Thyroid gland (tissue), 4 donors: ENCODE measurements at regions of chr21 and their contacts with region 1.

Region 1: GRCh38 chr21:44817506-44817880 is 369 bp downstream of the SUMO3 start:
- DNase-seq: peak; percentile 84 to 86
- H3K4me3 ChIP-seq: peak overlapping the region; percentile 35 to 87 (median 39)
- H3K27ac ChIP-seq: peak overlapping the region in 2 of 3 donors; percentile 61 to 71
- H3K4me1 ChIP-seq: peaks cover 19 to 46% of the 10 kb centered on the region in 2 donors
- H3K27me3 ChIP-seq: no peaks in the 10 kb centered on the region
- CTCF ChIP-seq: no peak
- POLR2A ChIP-seq: no peak

Region 2: DNA sequence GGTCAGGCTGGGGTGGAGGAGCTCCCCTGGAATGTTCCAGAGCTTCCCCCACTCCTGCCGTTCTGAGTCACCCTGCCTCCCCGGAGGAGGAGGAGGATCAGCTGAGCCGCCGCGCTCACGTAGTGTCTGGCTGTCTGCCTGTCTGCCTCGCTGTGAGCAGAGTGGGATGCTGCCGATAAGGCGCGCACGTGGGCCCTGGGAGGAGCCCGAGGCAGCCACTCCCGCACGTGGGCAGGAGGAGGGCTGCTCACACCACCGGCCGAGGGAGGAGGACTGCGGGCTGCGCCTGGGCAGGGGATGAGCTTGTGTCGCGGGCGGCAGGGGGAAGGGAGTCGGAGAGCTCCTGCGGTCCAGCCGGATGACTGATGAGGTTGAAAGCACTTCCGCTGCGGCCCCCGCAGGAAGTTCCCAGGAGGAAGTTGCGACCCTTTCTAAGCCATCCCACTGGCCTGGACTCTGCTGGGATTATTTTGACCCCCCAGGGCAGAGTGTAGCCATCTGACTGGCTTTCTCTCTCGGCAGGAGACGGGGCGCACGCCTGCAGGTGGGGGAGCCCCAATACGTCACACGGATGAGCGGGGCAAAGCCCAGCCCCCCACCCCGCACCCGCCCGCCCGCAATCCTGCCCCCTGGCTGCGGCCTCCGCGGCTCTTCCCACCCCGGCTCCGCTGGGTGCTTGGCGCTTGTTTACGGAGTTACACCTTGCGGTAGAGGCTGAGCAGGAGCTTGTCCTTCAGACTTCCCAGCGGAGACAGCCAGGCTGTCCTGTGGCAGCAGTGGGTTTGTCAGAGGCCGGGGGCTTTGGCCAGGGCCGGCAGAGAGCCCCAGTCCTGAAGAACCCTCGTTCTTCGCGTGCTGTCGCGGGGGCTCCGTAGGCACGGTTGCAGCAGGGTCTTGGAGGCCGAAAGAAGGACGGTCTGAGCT is 1088.8 kb before region 1 on chr21:
- intact Hi-C with region 1: no loop called
- DNase-seq: peak; percentile 98
- H3K4me3 ChIP-seq: peak overlapping the region in 1 of 3 donors; percentile 50
- H3K27ac ChIP-seq: peak overlapping the region; percentile 93 to 100 (median 99)
- H3K4me1 ChIP-seq: peaks cover 48 to 78% of the 10 kb centered on the region in 2 donors
- H3K27me3 ChIP-seq: no peaks in the 10 kb centered on the region
- CTCF ChIP-seq: peak in 1 of 6 experiments; percentile 35
- POLR2A ChIP-seq: peak in 1 of 2 donors; percentile 90

Region 3: DNA sequence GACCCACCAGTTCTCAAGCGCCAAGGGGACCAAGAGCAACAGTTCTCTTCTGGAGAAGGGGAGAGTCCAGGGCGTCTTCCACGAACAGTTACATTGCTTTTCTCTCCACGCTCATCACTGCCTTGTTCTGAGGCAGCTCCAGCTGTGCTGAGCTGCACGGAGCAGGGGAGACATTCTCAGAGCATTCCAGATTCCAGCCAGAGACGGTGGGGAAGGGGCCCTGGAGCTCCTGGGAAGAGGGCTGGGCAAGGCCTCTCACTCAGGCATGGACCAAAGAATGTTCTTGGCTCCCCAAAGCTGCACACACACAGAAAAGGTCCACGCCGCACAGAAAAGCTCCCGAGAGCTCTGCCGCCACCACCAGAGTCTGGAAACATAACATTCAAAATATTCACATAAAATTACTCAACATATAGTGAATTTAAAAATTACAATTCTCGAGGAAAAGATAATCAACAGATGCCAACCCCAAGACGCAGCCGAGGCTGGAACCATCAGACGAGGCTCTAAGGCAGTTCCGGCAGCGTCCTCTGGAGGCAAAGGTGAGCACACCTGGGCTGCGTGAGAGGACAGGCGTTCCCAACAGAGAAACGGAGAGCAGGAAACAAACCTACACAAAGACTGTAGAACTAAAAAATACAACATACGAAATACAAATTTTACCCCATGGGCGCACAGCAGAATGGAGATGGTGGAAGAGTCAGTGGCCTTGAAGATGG is 56.3 kb before region 1 on chr21:
- intact Hi-C with region 1: no loop called
- DNase-seq: peak in 1 of 2 donors; percentile 22
- H3K4me3 ChIP-seq: no peak overlapping the region
- H3K27ac ChIP-seq: no peak overlapping the region
- H3K4me1 ChIP-seq: peaks cover 0 to 9% of the 10 kb centered on the region in 2 donors
- H3K27me3 ChIP-seq: no peaks in the 10 kb centered on the region
- CTCF ChIP-seq: peak in 3 of 6 experiments; percentile 20 to 39 (median 22)
- POLR2A ChIP-seq: no peak

Region 4: GRCh38 chr21:44939532-44940115 is 122.1 kb after region 1 on chr21 and contains the start of gene SLX9:
- intact Hi-C with region 1: loop called (anchors 10 kb)
- DNase-seq: peak; percentile 70 to 74
- H3K4me3 ChIP-seq: peak within 1 kb of the TSS; percentile 25 to 96 (median 72)
- H3K27ac ChIP-seq: peak within 1 kb of the TSS in 2 of 3 donors; percentile 7 to 10
- H3K4me1 ChIP-seq: peaks cover 15 to 22% of the 10 kb centered on the region in 2 donors
- H3K27me3 ChIP-seq: no peaks in the 10 kb centered on the region
- CTCF ChIP-seq: no peak
- POLR2A ChIP-seq: peak in 1 of 2 donors; percentile 58
- total RNA-seq, gene SLX9: 4.8 to 19.1 (median 11.2) TPM